OCI-LY7 (cell line): ENCODE measurements at regions of chr1 and their contacts with region 1.

Region 1: DNA sequence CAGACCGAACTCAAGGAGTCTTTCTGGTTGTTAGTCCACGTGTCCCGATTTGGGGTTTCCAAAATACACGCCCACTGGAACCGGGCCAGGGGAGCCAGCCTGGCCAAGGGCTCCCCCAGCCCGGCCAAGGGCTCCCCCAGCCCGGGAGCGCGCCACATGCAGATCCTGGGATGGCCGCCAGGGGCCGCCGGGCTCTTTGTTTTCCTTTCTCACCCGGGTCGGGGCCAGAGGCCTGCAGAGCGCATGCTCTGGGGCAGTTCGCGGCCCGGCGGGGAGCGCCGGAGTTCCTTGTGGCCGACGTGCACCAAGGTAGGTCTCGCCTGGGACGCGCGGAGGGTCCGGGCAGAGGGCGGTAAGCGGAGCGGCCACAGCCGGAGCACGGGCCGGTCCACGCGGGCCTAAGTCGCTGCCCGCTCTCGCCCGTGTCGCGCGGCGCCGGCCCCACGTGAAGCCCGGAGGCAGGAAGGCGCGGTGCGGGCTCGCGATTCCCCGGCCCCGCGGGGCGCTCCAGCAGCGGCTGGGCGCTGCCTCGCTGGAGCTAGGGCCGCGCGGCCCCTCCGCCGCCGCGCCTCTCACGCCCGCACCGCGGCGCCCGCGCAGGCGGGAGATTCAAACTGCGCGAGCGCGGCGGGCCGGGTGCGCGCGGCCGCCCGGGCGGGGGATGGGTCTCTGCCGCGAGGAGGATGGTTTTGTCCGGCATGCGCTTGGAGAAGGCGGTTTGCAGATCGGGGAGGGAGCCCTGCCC is 12.3 kb downstream of the RCC1 start:
- DNase-seq: peak; percentile 94
- H3K4me3 ChIP-seq: peak overlapping the region; percentile 78
- H3K27ac ChIP-seq: peak overlapping the region; percentile 75
- H3K4me1 ChIP-seq: peaks cover 51% of the 10 kb centered on the region
- CTCF ChIP-seq: peak; percentile 93

Region 2: DNA sequence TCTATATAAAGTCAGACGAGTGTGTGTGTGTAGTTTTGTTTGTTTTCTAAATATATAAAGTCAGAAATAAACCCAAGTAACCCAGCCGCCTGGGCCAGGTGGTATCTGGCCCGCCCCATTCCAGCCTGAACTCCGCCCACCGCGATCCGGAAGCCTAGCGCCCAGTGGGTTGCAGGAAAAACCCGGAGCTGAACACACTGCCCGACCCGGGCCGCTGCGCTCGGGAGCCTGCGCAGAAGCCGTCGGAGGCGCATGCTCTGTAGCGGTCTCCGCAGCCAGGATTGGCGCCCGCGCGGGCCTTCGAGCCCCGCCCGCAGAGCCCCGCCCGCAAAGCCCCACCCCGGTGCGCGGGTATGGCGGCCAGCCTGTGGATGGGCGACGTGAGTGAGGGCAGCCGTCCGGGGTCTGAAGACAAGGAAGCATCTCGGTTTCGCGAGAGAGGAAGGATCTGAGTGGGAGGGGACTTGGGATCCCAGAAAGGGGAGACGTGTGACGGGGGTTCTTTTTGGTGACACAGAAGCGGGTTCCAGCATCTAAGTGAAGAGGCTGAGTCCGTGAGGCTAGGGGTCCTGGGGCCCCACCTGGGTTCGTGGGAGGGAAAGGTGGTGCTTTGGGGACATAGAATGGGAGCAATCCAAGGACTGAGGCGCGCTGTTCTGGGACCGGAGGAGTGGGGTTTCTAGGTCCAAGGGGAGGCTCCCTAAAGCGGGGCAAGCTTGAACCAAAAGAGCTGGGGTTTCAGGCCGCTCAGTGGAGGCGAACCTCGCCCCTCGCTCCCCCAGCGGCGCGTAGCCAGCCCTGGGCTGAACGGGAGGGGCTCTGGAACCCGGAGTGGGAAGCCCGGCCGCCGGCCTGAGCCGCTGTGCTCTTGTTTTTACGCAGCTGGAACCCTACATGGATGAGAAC is 34.8 kb after region 1 on chr1 and contains the start of gene TRNAU1AP:
- CTCF ChIA-PET with region 1: no interaction called
- POLR2A ChIA-PET with region 1: interaction called, 5 read pairs
- intact Hi-C with region 1: loop called (anchors 1 kb)
- DNase-seq: peak; percentile 98
- H3K4me3 ChIP-seq: peak within 1 kb of the TSS; percentile 90
- H3K27ac ChIP-seq: peak within 1 kb of the TSS; percentile 82
- H3K4me1 ChIP-seq: peaks cover 24% of the 10 kb centered on the region
- CTCF ChIP-seq: no peak
- total RNA-seq, gene TRNAU1AP: 30.6 and 39.6 TPM in 2 replicates

Region 3: GRCh38 chr1:28581536-28582247 is 63.5 kb after region 1 on chr1:
- CTCF ChIA-PET with region 1: no interaction called
- POLR2A ChIA-PET with region 1: interaction called, 4 read pairs
- intact Hi-C with region 1: loop called (anchors 1 kb)
- DNase-seq: peak; percentile 96
- H3K4me3 ChIP-seq: peak overlapping the region; percentile 97
- H3K27ac ChIP-seq: peak overlapping the region; percentile 85
- H3K4me1 ChIP-seq: peaks cover 38% of the 10 kb centered on the region
- CTCF ChIP-seq: 0 out of 2 replicates have a peak, but pooled peaks have one; percentile 41

Region 4: GRCh38 chr1:28602536-28603439 is 84.6 kb after region 1 on chr1:
- CTCF ChIA-PET with region 1: no interaction called
- POLR2A ChIA-PET with region 1: no interaction called
- intact Hi-C with region 1: loop called (anchors 2 kb)
- DNase-seq: peak; percentile 68
- H3K4me3 ChIP-seq: no peak overlapping the region
- H3K27ac ChIP-seq: no peak overlapping the region
- H3K4me1 ChIP-seq: no peaks in the 10 kb centered on the region
- CTCF ChIP-seq: peak; percentile 95

Region 5: DNA sequence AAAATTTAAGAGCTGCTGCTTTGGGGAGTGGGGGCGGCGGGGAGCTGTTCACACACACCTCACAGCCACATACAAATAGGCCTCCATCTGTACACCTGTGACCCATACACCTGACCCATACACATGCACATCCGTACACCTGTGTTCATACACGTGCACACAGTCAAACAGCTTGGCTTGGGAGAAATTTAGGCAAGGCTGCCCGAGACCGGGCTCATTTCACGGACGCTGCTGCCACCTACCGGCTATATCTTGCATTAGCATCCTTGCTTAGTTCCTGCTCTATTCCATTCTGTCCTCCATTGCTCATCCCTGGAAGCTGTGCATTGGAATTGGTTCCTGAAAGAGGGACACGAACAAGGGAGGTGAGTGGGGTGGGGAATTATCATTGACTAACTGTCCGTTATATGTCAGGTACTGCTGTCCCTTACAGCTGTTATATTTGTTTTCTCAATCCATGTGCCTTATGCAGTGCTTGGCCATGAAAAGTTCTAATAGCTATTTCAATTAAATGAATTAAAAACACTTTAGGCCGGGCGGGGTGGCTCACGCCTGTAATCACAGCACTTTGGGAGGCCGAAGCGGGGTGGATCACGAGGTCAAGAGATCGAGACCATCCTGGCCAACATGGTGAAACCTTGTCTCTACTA is 359.1 kb after region 1 on chr1:
- CTCF ChIA-PET with region 1: no interaction called
- POLR2A ChIA-PET with region 1: no interaction called
- intact Hi-C with region 1: loop called (anchors 2 kb)
- DNase-seq: peak; percentile 84
- H3K4me3 ChIP-seq: no peak overlapping the region
- H3K27ac ChIP-seq: no peak overlapping the region
- H3K4me1 ChIP-seq: peaks cover 6% of the 10 kb centered on the region
- CTCF ChIP-seq: peak; percentile 98